Activated naive CD4-positive, alpha-beta T cell treated with anti-CD3 and anti-CD28 coated beads for 36 hours (primary cell): ENCODE measurements at regions of chr1 and their contacts with region 1.

Region 1: DNA sequence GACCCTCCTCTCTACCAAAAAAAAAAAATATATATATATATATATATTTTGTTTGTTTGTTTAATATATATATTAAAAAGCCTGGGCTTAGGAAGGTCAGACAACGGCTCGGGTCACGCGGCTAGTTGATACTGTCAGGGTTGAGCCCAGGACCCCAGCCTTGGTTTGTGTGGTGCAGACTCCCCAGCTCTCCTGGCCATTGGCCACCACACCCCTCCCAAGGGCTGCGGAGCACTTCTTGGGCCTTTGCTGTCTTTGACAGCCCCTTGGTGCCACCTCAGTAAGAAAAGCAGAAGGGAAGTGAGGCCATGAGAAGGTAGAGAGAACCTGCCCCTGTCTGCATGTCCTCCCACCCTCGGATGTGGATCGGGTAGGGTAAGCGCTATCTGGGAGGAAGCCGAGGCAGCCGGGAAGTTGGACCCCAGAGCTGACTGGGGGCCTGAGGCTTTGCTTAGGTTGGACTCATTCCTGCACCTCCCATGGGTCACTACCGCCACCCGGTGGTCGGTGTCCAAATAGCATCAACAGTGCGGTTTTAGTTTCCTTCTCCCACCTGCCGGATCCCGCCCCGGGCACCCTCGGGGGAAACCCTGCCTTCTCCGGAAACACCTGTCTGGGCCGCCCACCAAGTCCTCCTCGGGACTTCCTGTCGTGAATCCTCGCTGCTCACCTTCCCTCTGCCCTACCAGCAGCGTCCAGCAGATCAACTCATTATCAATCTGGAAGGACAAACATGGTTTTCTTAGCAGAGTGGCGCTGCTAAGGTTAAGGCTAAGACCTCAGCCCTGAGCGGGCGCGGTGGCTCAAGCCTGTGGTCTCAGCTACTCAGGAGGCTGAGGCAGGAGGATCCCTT is 29.8 kb upstream of the GNPAT start:
- DNase-seq: peak; percentile 98
- H3K4me3 Mint-ChIP-seq: peak overlapping the region; percentile 77
- H3K27ac Mint-ChIP-seq: no peak overlapping the region
- H3K4me1 Mint-ChIP-seq: peaks cover 7% of the 10 kb centered on the region
- H3K27me3 Mint-ChIP-seq: no peaks in the 10 kb centered on the region

Region 2: GRCh38 chr1:230642263-230642959 is 568.8 kb before region 1 on chr1 and contains the start of gene COG2:
- CTCF ChIA-PET with region 1: no interaction called
- intact Hi-C with region 1: loop called (anchors 1 kb)
- DNase-seq: peak; percentile 95
- H3K4me3 Mint-ChIP-seq: peak within 1 kb of the TSS; percentile 94
- H3K27ac Mint-ChIP-seq: peak within 1 kb of the TSS; percentile 75
- H3K4me1 Mint-ChIP-seq: peaks cover 39% of the 10 kb centered on the region
- H3K27me3 Mint-ChIP-seq: peaks cover 11% of the 10 kb centered on the region
- total RNA-seq, gene COG2: 19.9 to 22.1 TPM

Region 3: GRCh38 chr1:230867903-230868735 is 343.1 kb before region 1 on chr1 and contains the start of gene C1orf198:
- CTCF ChIA-PET with region 1: no interaction called
- intact Hi-C with region 1: loop called (anchors 2 kb)
- DNase-seq: peak; percentile 75
- H3K4me3 Mint-ChIP-seq: peak within 1 kb of the TSS; percentile 84
- H3K27ac Mint-ChIP-seq: no peak within 1 kb of the TSS
- H3K4me1 Mint-ChIP-seq: peaks cover 18% of the 10 kb centered on the region
- H3K27me3 Mint-ChIP-seq: peaks cover 16% of the 10 kb centered on the region
- total RNA-seq, gene C1orf198: 4.7 to 4.9 TPM

Region 4: GRCh38 chr1:231039161-231040018 is 171.8 kb before region 1 on chr1:
- CTCF ChIA-PET with region 1: interaction called, 4 read pairs
- intact Hi-C with region 1: loop called (anchors 10 kb)
- DNase-seq: peak; percentile 56
- H3K4me3 Mint-ChIP-seq: peak overlapping the region; percentile 75
- H3K27ac Mint-ChIP-seq: no peak overlapping the region
- H3K4me1 Mint-ChIP-seq: peaks cover 24% of the 10 kb centered on the region
- H3K27me3 Mint-ChIP-seq: peaks cover 2% of the 10 kb centered on the region

Region 5: GRCh38 chr1:231240883-231241735 is 29.9 kb after region 1 on chr1 and contains the start of gene GNPAT:
- CTCF ChIA-PET with region 1: interaction called, 3 read pairs
- intact Hi-C with region 1: loop called (anchors 1 kb)
- DNase-seq: peak; percentile 90
- H3K4me3 Mint-ChIP-seq: peak within 1 kb of the TSS; percentile 97
- H3K27ac Mint-ChIP-seq: peak within 1 kb of the TSS; percentile 82
- H3K4me1 Mint-ChIP-seq: peaks cover 58% of the 10 kb centered on the region
- H3K27me3 Mint-ChIP-seq: no peaks in the 10 kb centered on the region
- total RNA-seq, gene GNPAT: 60.4 to 62.0 TPM